ENCODE measurements at regions of chr12 and their contacts with region 1.

Region 1: DNA sequence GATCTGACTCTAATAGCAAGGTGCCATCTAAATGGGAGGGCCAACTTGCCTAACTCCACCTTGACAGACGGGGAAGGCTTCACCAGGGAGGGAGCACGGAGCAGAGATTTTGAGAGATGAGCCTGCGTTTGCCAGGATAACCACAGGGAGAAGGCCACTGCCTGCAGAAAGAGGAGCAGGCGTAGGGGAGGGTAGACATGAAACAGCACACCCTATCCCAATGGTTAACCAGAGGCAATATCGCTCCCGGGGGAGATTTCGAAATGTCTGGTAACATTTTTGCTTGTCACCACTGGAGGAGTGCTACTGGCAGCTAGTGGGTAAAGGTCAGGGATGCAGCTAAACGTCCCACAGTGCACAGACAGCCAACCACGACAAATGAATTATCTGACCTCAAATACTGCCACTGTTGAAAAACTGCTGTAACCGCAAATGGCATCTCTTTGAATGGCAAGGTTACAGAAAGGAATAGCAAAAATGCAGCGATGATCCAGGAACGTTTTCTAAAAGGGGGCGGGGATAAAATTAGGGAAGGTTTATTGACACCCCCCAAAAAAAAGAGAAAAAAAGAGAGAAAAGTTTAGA is 126.0 kb upstream of the ATF7IP start:
- DNase-seq: no peak
- ATAC-seq: peak; percentile 42
- H3K4me3 ChIP-seq: no peak overlapping the region
- H3K27ac ChIP-seq: no peak overlapping the region
- H3K4me1 ChIP-seq: no peaks in the 10 kb centered on the region; a peak in 2 of 5 replicates
- H3K27me3 ChIP-seq: no peaks in the 10 kb centered on the region
- CTCF ChIP-seq: no peak
- EP300 ChIP-seq: no peak
- POLR2A ChIP-seq: no peak
- RAD21 ChIP-seq: no peak

Region 2: GRCh38 chr12:14185427-14186192 is 53.8 kb before region 1 on chr12:
- CTCF ChIA-PET with region 1: interaction called, 3 read pairs
- POLR2A ChIA-PET with region 1: no interaction called
- in situ Hi-C with region 1: no loop called
- intact Hi-C with region 1: loop called (anchors 5 kb)
- DNase-seq: peak; percentile 9 to 58 (median 18)
- ATAC-seq: peak; percentile 88
- H3K4me3 ChIP-seq: no peak overlapping the region
- H3K27ac ChIP-seq: no peak overlapping the region
- H3K4me1 ChIP-seq: no peaks in the 10 kb centered on the region
- H3K27me3 ChIP-seq: no peaks in the 10 kb centered on the region
- CTCF ChIP-seq: peak; percentile 57 to 67 (median 61); a peak in 5 of 6 replicates
- EP300 ChIP-seq: no peak
- POLR2A ChIP-seq: no peak
- RAD21 ChIP-seq: peak; percentile 55 to 70

Region 3: GRCh38 chr12:14365294-14366208 is 126.1 kb after region 1 on chr12 and contains the start of gene ATF7IP:
- CTCF ChIA-PET with region 1: no interaction called
- POLR2A ChIA-PET with region 1: interaction called, 3 read pairs
- in situ Hi-C with region 1: no loop called
- intact Hi-C with region 1: loop called (anchors 5 kb)
- DNase-seq: peak; percentile 75 to 90 (median 82)
- ATAC-seq: peak; percentile 93
- H3K4me3 ChIP-seq: peak within 1 kb of the TSS; percentile 41
- H3K27ac ChIP-seq: peak within 1 kb of the TSS; percentile 93
- H3K4me1 ChIP-seq: no peaks in the 10 kb centered on the region; a peak in 1 of 5 replicates
- H3K27me3 ChIP-seq: no peaks in the 10 kb centered on the region
- CTCF ChIP-seq: peak in 1 of 3 experiments; percentile 40; a peak in 2 of 6 replicates
- EP300 ChIP-seq: no peak
- POLR2A ChIP-seq: peak; percentile 60
- RAD21 ChIP-seq: peak; percentile 28 to 47; a peak in 3 of 4 replicates
- polyA plus RNA-seq, gene ATF7IP: 2.8 to 3.5 TPM

Region 4: DNA sequence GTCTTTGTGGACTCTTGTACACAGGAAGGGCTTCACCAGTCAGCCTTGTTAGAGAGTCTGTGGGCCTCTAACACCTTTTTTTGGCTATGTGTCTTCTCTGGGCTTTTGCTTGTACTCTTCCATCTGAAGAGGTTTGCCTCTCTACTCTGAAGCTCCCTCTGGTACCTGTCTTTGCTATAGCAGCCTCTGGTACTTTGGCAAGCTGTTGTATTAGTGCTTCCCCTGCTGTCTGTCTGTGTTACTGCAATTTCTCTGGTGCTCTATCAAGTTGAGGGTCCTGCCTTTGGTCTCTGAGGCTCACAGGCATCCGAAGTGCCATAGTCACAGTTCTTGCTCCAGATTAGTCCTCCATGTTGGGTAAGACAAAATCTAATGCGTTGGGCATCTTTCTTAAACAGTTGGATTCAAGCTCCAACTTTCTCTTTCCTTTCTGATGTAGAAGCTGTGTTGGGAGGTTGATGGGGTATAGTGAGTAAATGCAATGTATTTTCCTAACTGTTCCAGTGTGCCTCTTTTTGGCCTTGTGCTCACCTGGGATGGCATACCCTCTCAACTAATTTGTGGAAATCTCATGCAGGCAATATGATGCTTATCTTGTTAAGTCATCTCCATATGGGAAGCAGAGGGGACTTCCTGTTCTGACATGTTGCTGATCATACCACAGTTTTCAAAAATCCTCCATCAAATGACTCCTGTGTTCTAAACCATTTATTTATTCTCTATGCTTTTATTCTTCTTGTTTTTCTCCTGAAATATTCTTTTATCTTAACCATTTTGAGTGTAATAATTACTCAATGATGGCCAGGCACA is 214.9 kb after region 1 on chr12:
- CTCF ChIA-PET with region 1: interaction called, 15 read pairs
- POLR2A ChIA-PET with region 1: no interaction called
- in situ Hi-C with region 1: no loop called
- intact Hi-C with region 1: no loop called
- DNase-seq: peak; percentile 12 to 50 (median 28)
- ATAC-seq: peak; percentile 91
- H3K4me3 ChIP-seq: no peak overlapping the region
- H3K27ac ChIP-seq: no peak overlapping the region
- H3K4me1 ChIP-seq: no peaks in the 10 kb centered on the region
- H3K27me3 ChIP-seq: no peaks in the 10 kb centered on the region
- CTCF ChIP-seq: peak; percentile 63 to 98 (median 90)
- EP300 ChIP-seq: no peak
- POLR2A ChIP-seq: no peak
- RAD21 ChIP-seq: peak; percentile 31 to 86

Region 5: GRCh38 chr12:14716848-14717444 is 477.5 kb after region 1 on chr12:
- CTCF ChIA-PET with region 1: no interaction called
- POLR2A ChIA-PET with region 1: no interaction called
- in situ Hi-C with region 1: no loop called
- intact Hi-C with region 1: loop called (anchors 5 kb)
- DNase-seq: peak; percentile 18 to 44 (median 30)
- ATAC-seq: peak; percentile 81
- H3K4me3 ChIP-seq: no peak overlapping the region
- H3K27ac ChIP-seq: no peak overlapping the region
- H3K4me1 ChIP-seq: no peaks in the 10 kb centered on the region
- H3K27me3 ChIP-seq: no peaks in the 10 kb centered on the region
- CTCF ChIP-seq: peak; percentile 34 to 51 (median 45); a peak in 5 of 6 replicates
- EP300 ChIP-seq: no peak
- POLR2A ChIP-seq: no peak
- RAD21 ChIP-seq: peak in 1 of 2 experiments; percentile 59; a peak in 3 of 4 replicates